Activated T-helper 1 cell treated with anti-CD3 and anti-CD28 coated beads, Interleukin-12 subunit alpha, Interleukin-12 subunit beta, Interleukin-2, Interleukin-4 antibody, amounts not matched to agents 30 ng/mL and 10 ng/mL and 1 ng/mL, durations not matched to agents 14 hours and 24 hours and 36 hours (primary cell): ENCODE measurements at regions of chr1 and their contacts with region 1.

Region 1: GRCh38 chr1:185652348-185652747 is 81.8 kb upstream of the HMCN1 start:
- DNase-seq: no peak
- H3K4me3 Mint-ChIP-seq: no peak overlapping the region
- H3K27ac Mint-ChIP-seq: no peak overlapping the region
- H3K4me1 Mint-ChIP-seq: peaks cover 9% of the 10 kb centered on the region
- H3K27me3 Mint-ChIP-seq: peaks cover 4% of the 10 kb centered on the region

Region 2: GRCh38 chr1:185500001-185500626 is 152.2 kb before region 1 on chr1:
- intact Hi-C with region 1: no loop called
- DNase-seq: no peak
- H3K4me3 Mint-ChIP-seq: no peak overlapping the region
- H3K27ac Mint-ChIP-seq: peak overlapping the region; percentile 43
- H3K4me1 Mint-ChIP-seq: peaks cover 36% of the 10 kb centered on the region
- H3K27me3 Mint-ChIP-seq: peaks cover 3% of the 10 kb centered on the region

Region 3: DNA sequence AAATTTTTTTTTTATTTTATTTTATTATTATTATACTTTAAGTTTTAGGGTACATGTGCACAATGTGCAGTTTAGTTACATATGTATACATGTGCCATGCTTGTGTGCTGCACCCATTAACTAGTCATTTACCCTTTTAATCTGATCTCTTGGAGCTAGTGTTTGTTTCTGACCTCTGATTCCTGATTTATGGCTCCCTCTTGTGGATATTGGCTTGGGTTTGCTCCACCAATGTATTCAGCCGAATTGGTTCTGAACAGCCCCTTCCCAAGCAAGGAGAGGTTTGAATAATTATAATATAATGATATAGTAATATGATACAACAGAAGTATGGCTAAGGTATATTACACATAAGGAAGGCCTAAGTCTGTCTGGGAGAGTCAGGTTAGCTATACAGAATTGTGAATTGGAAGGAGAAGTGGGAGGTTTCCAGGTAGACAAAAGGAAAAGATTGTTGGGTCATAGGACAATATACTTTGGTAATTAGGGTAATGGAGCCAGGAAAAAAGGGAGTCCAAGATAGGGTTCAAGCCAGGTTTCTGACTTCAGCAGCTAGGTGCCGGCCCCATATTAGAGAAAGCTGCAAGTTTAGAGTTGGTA is 28.8 kb after region 1 on chr1:
- intact Hi-C with region 1: loop called (anchors 1 kb)
- DNase-seq: peak; percentile 20
- H3K4me3 Mint-ChIP-seq: no peak overlapping the region
- H3K27ac Mint-ChIP-seq: no peak overlapping the region
- H3K4me1 Mint-ChIP-seq: peaks cover 21% of the 10 kb centered on the region
- H3K27me3 Mint-ChIP-seq: peaks cover 14% of the 10 kb centered on the region